ENCODE measurements at regions of chr22 and their contacts with region 1.

Region 1: DNA sequence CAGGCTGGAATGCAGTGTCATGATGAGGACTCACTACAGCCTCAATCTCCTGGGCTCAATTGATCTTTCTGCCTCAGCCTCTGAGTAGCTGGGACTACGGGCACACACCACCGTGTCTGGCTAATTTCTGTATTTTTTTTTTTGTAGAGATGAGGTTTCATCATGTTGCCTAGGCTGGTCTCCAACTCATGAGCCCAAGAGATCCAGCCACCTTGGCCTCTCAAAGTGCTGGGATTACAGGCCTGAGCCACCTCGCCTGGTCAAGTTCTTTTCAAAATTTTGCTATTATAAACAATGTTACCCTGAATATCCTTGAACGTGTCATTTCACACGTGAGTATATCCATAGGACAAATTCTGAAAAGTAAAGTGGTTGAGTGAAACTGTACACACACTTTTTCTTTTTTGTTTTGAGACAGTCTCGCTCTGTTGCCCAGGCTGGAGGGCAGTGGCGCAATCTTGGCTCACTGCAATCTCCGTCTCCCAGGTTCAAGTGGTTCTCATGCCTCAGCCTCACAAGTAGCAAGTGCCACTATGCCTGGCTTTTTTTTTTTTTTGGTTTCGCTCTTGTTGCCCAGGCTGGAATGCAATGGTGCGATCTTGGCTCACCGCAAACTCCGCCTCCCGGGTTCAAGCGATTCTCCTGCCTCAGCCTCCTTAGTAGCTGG is 21.6 kb upstream of the EP300 start:
- DNase-seq: no peak
- ATAC-seq: no peak
- H3K4me3 ChIP-seq: no peak overlapping the region
- H3K27ac ChIP-seq: no peak overlapping the region
- H3K4me1 ChIP-seq: peaks cover 16% of the 10 kb centered on the region
- H3K27me3 ChIP-seq: no peaks in the 10 kb centered on the region
- CTCF ChIP-seq: no peak
- EP300 ChIP-seq: no peak
- POLR2A ChIP-seq: no peak
- RAD21 ChIP-seq: no peak

Region 2: GRCh38 chr22:41038732-41039445 is 31.9 kb before region 1 on chr22:
- CTCF ChIA-PET with region 1: no interaction called
- POLR2A ChIA-PET with region 1: no interaction called
- RAD21 ChIA-PET with region 1: no interaction called
- SMC1A ChIA-PET with region 1: no interaction called
- in situ Hi-C with region 1: no loop called
- intact Hi-C with region 1: no loop called
- DNase-seq: no peak
- ATAC-seq: no peak
- H3K4me3 ChIP-seq: no peak overlapping the region
- H3K27ac ChIP-seq: no peak overlapping the region
- H3K4me1 ChIP-seq: no peaks in the 10 kb centered on the region
- H3K27me3 ChIP-seq: no peaks in the 10 kb centered on the region
- CTCF ChIP-seq: no peak
- EP300 ChIP-seq: no peak
- POLR2A ChIP-seq: no peak
- RAD21 ChIP-seq: no peak

Region 3: DNA sequence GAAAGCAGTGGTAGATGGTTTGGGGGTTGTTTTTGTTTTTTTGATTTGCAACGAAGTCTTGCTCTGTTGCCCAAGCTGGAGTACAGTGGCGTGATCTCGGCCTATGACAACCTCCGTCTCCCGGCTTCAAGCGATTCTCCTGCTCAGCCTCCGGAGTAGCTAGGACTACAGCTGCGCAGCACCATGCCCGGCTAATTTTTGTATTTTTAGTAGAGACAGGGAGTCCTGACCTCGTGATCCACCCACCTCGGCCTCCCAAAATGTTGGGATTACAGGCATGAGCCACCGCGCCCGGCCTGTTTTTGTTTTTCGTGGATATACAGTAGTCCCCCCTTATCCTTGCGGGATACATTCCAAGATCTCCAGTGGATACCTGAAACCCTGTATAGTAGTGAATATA is 28.2 kb after region 1 on chr22:
- CTCF ChIA-PET with region 1: no interaction called
- POLR2A ChIA-PET with region 1: interaction called, 13 read pairs
- RAD21 ChIA-PET with region 1: no interaction called
- SMC1A ChIA-PET with region 1: interaction called, 5 read pairs
- in situ Hi-C with region 1: no loop called
- intact Hi-C with region 1: no loop called
- DNase-seq: no peak
- ATAC-seq: no peak
- H3K4me3 ChIP-seq: no peak overlapping the region
- H3K27ac ChIP-seq: no peak overlapping the region
- H3K4me1 ChIP-seq: no peaks in the 10 kb centered on the region; the same call in 1 of the 2 replicates
- H3K27me3 ChIP-seq: no peaks in the 10 kb centered on the region
- CTCF ChIP-seq: no peak
- EP300 ChIP-seq: no peak
- POLR2A ChIP-seq: no peak
- RAD21 ChIP-seq: no peak

Region 4: DNA sequence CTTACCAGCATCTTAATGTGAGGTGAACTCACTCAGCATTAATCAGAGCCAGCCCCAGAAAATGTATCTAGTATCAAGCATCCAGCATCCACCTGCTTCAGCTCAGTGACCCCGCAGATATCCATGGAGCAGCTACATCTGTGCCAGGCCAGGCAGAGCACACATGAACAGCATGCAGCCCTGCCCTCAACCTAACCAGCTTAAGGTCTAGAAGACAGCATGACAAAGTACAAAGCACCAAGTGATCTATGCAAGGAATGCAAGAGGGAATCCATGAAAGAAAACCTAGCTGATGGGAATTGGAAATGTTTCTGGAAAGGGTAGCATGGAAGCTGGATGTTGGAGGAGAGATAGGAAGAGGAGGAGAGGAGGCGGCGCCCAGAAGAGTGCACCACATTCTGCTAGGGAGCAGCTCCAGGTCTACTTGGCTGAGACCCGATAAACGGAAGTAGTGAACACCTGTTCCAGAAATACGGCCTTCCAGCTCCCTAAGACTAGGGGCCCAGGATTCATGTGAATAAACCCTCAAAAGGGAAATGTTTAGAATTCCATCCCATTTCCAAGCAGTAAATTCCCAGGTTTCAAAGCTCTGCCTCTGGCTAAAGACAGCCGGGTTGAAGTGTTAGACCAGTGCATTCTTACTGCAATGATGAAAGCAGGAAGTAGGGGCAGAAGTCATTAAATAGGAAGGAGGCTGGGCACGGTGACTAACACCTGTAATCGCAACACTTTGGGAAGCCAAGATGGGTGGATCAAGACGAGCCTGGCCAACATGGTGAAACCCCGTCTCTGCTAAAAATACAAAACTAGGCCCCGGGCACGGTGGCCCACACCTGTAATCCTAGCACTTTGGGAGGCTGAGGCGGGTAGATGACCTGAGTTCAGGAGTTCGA is 110.8 kb after region 1 on chr22:
- CTCF ChIA-PET with region 1: no interaction called
- POLR2A ChIA-PET with region 1: no interaction called
- RAD21 ChIA-PET with region 1: no interaction called
- SMC1A ChIA-PET with region 1: no interaction called
- in situ Hi-C with region 1: no loop called
- intact Hi-C with region 1: no loop called
- DNase-seq: no peak
- ATAC-seq: no peak; the same call in 2 of the 3 replicates
- H3K4me3 ChIP-seq: no peak overlapping the region
- H3K27ac ChIP-seq: no peak overlapping the region
- H3K4me1 ChIP-seq: no peaks in the 10 kb centered on the region
- H3K27me3 ChIP-seq: no peaks in the 10 kb centered on the region
- CTCF ChIP-seq: no peak
- EP300 ChIP-seq: no peak
- POLR2A ChIP-seq: no peak; the same call in 1 of the 2 replicates
- RAD21 ChIP-seq: no peak

Measured in GM12878 (cell line).